ENCODE measurements at regions of chr10 and their contacts with region 1.

Region 1: GRCh38 chr10:14200698-14201544 is 129.8 kb downstream of the FRMD4A start:
- DNase-seq: no peak
- H3K4me3 ChIP-seq: no peak overlapping the region
- H3K27ac ChIP-seq: no peak overlapping the region
- H3K4me1 ChIP-seq: no peaks in the 10 kb centered on the region
- H3K27me3 ChIP-seq: no peaks in the 10 kb centered on the region
- CTCF ChIP-seq: no peak

Region 2: GRCh38 chr10:14478604-14479003 is 277.7 kb after region 1 on chr10:
- intact Hi-C with region 1: loop called (anchors 1 kb)
- DNase-seq: no peak
- H3K4me3 ChIP-seq: no peak overlapping the region
- H3K27ac ChIP-seq: no peak overlapping the region
- H3K4me1 ChIP-seq: no peaks in the 10 kb centered on the region
- H3K27me3 ChIP-seq: no peaks in the 10 kb centered on the region
- CTCF ChIP-seq: peak in 2 of 3 experiments; percentile 29 to 72